Aorta (tissue), 5 donors: ENCODE measurements at regions of chr6 and their contacts with region 1.

Region 1: GRCh38 chr6:134373282-134373922 is 55.5 kb upstream of the SGK1 start:
- DNase-seq: peak in 1 of 2 donors; percentile 85
- ATAC-seq: peak; percentile 86
- H3K4me3 ChIP-seq: no peak overlapping the region
- H3K27ac ChIP-seq: no peak overlapping the region
- H3K4me1 ChIP-seq: peaks cover 0 to 4% of the 10 kb centered on the region in 2 donors
- H3K27me3 ChIP-seq: no peaks in the 10 kb centered on the region

Region 2: GRCh38 chr6:134230087-134230700 is 143.2 kb before region 1 on chr6:
- intact Hi-C with region 1: loop called in 1 of 2 experiments (anchors 5 kb)
- DNase-seq: peak in 1 of 2 donors; percentile 63
- ATAC-seq: no peak
- H3K4me3 ChIP-seq: no peak overlapping the region
- H3K27ac ChIP-seq: no peak overlapping the region
- H3K4me1 ChIP-seq: no peaks in the 10 kb centered on the region
- H3K27me3 ChIP-seq: no peaks in the 10 kb centered on the region

Region 3: DNA sequence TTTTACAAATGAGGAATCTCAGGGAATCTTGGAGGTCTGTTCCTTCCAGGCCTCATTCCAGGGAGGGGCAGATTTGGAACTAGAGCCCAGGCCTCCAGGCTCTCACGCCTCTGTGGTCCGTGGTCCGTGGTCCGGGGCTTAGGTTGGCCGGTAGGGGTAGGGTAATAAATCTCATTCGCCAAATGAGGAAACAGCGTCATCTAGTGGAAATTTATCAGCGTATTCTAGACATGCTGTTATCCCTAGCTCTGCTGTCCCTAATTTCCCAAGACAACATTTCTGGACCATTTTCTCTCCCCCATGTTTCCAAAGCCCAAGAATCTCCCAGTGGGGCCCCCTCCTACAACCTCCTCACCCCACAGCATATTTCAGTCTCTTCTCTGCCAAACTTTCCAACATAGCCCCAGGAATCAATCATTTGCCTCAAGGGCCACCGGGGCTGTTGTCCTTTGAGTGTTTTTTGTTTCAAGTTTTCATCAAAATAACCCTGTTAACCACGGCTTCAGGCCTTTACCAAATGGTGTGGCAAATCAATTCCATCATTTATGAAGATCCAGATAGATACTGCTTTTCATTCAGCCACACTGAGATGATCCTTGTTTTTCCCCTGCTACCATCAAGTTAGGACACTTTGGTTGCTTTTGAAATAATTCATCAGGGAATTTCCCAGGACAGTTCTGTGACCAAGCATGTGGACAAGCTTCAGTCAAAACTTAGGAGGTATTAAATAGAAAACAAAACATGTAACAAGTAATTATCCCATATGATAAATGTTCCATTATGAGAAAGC is 449.7 kb after region 1 on chr6:
- intact Hi-C with region 1: loop called in 1 of 2 experiments (anchors 10 kb)
- DNase-seq: no peak
- ATAC-seq: peak; percentile 80
- H3K4me3 ChIP-seq: no peak overlapping the region
- H3K27ac ChIP-seq: no peak overlapping the region
- H3K4me1 ChIP-seq: peaks cover 3 to 5% of the 10 kb centered on the region in 2 donors
- H3K27me3 ChIP-seq: no peaks in the 10 kb centered on the region